K562 (cell line): ENCODE measurements at regions of chr2 and their contacts with region 1.

Region 1: GRCh38 chr2:175187378-175187777 is 5.9 kb upstream of the ATP5MC3 start:
- DNase-seq: peak in 2 of 4 experiments; percentile 43 to 57
- ATAC-seq: peak; percentile 96
- H3K4me3 ChIP-seq: no peak overlapping the region
- H3K27ac ChIP-seq: no peak overlapping the region
- H3K4me1 ChIP-seq: no peaks in the 10 kb centered on the region
- H3K27me3 ChIP-seq: no peaks in the 10 kb centered on the region
- CTCF ChIP-seq: peak; percentile 51 to 74 (median 65)
- EP300 ChIP-seq: no peak
- POLR2A ChIP-seq: no peak
- RAD21 ChIP-seq: peak; percentile 27 to 67; a peak in 2 of 4 replicates

Region 2: GRCh38 chr2:175036582-175037018 is 150.8 kb before region 1 on chr2:
- CTCF ChIA-PET with region 1: no interaction called
- POLR2A ChIA-PET with region 1: no interaction called
- in situ Hi-C with region 1: no loop called
- intact Hi-C with region 1: loop called (anchors 2 kb)
- DNase-seq: peak; percentile 49 to 55 (median 53)
- ATAC-seq: peak; percentile 82
- H3K4me3 ChIP-seq: no peak overlapping the region
- H3K27ac ChIP-seq: no peak overlapping the region
- H3K4me1 ChIP-seq: no peaks in the 10 kb centered on the region; a peak in 1 of 5 replicates
- H3K27me3 ChIP-seq: no peaks in the 10 kb centered on the region; a peak in 1 of 5 replicates
- CTCF ChIP-seq: peak; percentile 47 to 76 (median 53); a peak in 5 of 6 replicates
- EP300 ChIP-seq: no peak
- POLR2A ChIP-seq: no peak
- RAD21 ChIP-seq: peak; percentile 52 to 76

Region 3: DNA sequence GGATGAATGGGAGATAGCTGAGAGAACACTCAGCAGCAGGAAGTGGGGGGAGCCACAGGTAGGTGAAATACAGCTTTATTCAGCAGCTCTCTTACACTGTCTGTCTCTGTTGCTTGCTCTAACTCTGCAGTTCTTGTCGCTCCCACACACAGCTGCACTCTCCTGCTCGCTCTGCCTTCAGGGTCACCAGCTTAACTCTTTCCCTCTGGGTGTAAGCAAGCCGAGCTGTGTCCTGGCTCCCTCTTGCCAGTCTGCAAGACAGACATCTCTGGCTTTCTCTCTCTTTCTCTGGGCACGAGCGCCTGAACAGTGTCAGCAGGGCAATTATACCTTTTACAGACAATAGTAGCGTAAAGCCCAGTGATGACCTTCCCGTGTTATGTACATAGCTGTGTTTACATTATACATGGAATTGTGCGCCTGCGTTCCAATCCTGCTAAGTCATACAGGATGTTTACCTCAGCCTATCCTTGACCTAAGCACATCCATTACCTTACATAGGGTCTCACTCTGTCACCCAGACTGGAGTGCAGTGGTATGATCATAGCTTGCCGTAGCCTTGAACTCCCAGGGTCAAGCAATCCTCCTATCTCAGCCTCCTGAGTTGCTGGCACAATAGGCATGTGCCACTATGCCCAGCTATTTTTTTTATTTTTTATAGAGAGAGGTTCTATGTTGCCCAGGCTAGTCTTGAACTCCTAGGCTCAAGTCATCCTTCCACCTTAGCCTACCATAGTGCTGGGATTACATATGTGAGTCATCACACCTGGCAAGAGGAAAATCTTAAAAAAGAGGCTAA is 124.4 kb before region 1 on chr2:
- CTCF ChIA-PET with region 1: no interaction called
- POLR2A ChIA-PET with region 1: no interaction called
- in situ Hi-C with region 1: no loop called
- intact Hi-C with region 1: no loop called
- DNase-seq: peak in 1 of 4 experiments; percentile 10
- ATAC-seq: peak; percentile 47
- H3K4me3 ChIP-seq: no peak overlapping the region
- H3K27ac ChIP-seq: no peak overlapping the region
- H3K4me1 ChIP-seq: no peaks in the 10 kb centered on the region
- H3K27me3 ChIP-seq: no peaks in the 10 kb centered on the region
- CTCF ChIP-seq: no peak
- EP300 ChIP-seq: no peak
- POLR2A ChIP-seq: no peak
- RAD21 ChIP-seq: no peak

Region 4: GRCh38 chr2:175111200-175111657 is 76.1 kb before region 1 on chr2:
- CTCF ChIA-PET with region 1: no interaction called
- POLR2A ChIA-PET with region 1: no interaction called
- in situ Hi-C with region 1: no loop called
- intact Hi-C with region 1: loop called (anchors 2 kb)
- DNase-seq: peak; percentile 37 to 63 (median 56)
- ATAC-seq: peak; percentile 90
- H3K4me3 ChIP-seq: no peak overlapping the region
- H3K27ac ChIP-seq: no peak overlapping the region
- H3K4me1 ChIP-seq: no peaks in the 10 kb centered on the region
- H3K27me3 ChIP-seq: no peaks in the 10 kb centered on the region
- CTCF ChIP-seq: peak; percentile 42 to 70 (median 62); a peak in 3 of 6 replicates
- EP300 ChIP-seq: no peak
- POLR2A ChIP-seq: no peak
- RAD21 ChIP-seq: peak; percentile 46 to 77; a peak in 3 of 4 replicates